Activated CD4-positive, alpha-beta T cell treated with anti-CD3 and anti-CD28 coated beads, Interleukin-2, amount 10 ng/mL, durations not matched to agents 24 days and 14 days (primary cell): ENCODE measurements at regions of chr19 and their contacts with region 1.

Region 1: GRCh38 chr19:10870955-10871603 is at the start of gene CARM1:
- DNase-seq: peak; percentile 100
- H3K4me3 Mint-ChIP-seq: peak within 1 kb of the TSS; percentile 93
- H3K27ac Mint-ChIP-seq: peak within 1 kb of the TSS; percentile 96
- H3K4me1 Mint-ChIP-seq: peaks cover 30% of the 10 kb centered on the region
- H3K27me3 Mint-ChIP-seq: no peaks in the 10 kb centered on the region
- total RNA-seq, gene CARM1: 92.4 and 93.7 TPM in 2 replicates

Region 2: DNA sequence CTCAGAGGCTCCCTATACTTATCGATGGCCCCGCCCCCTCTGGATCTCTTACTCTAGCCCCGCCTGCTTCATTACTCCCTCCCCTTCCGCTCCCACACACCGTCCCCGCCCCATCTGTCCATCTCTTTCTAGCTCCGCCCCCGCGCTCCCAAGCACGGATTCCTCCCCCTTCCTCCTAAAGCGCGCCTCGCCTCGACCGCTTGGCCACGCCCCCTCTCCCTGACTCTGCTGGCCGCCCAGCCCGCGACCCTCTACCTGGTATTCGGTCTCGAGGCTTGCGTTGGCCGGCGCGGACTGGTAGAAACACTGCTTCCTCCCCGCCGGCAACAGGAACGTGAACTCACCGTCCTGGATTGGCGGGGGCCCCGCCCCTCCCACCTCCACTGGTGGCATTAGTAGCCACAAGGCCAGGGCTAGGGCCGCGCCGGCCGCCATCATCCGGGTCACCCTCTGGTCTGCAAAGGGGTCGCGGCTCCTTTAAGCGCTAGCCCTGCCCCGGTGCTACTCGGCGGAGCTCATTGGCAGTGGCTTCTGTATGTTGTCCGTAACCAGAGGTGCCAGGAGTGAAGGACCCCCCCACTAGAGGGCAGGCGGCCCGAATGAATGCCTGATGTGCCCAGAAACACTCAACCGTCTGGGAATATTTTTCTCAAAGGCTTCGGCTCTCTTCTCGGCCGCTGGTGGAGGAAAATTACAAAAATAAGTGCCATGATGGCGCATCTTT is 35.2 kb before region 1 on chr19 and contains the start of gene TMED1:
- intact Hi-C with region 1: loop called (anchors 1 kb)
- DNase-seq: peak; percentile 99
- H3K4me3 Mint-ChIP-seq: peak within 1 kb of the TSS; percentile 98
- H3K27ac Mint-ChIP-seq: peak within 1 kb of the TSS; percentile 99
- H3K4me1 Mint-ChIP-seq: peaks cover 10% of the 10 kb centered on the region
- H3K27me3 Mint-ChIP-seq: no peaks in the 10 kb centered on the region
- total RNA-seq, gene TMED1: 17.6 and 22.4 TPM in 2 replicates

Region 3: GRCh38 chr19:10928525-10929401 is 57.7 kb after region 1 on chr19 and contains the starts of genes TIMM29 and YIPF2:
- intact Hi-C with region 1: loop called (anchors 2 kb)
- DNase-seq: peak; percentile 98
- H3K4me3 Mint-ChIP-seq: peak within 1 kb of the TSS; percentile 96
- H3K27ac Mint-ChIP-seq: peak within 1 kb of the TSS; percentile 89
- H3K4me1 Mint-ChIP-seq: peaks cover 15% of the 10 kb centered on the region
- H3K27me3 Mint-ChIP-seq: no peaks in the 10 kb centered on the region
- total RNA-seq, gene TIMM29: 18.4 and 19.8 TPM in 2 replicates
- total RNA-seq, gene YIPF2: 21.7 and 23.2 TPM in 2 replicates

Region 4: GRCh38 chr19:10952809-10953208 is 81.7 kb after region 1 on chr19:
- intact Hi-C with region 1: no loop called
- DNase-seq: no peak
- H3K4me3 Mint-ChIP-seq: no peak overlapping the region
- H3K27ac Mint-ChIP-seq: no peak overlapping the region
- H3K4me1 Mint-ChIP-seq: peaks cover 5% of the 10 kb centered on the region
- H3K27me3 Mint-ChIP-seq: no peaks in the 10 kb centered on the region